Activated naive CD4-positive, alpha-beta T cell treated with anti-CD3 and anti-CD28 coated beads, Interleukin-2, amount 10 ng/mL, durations not matched to agents 7 days and 5 days (primary cell): ENCODE measurements at regions of chr10 and their contacts with region 1.

Region 1: DNA sequence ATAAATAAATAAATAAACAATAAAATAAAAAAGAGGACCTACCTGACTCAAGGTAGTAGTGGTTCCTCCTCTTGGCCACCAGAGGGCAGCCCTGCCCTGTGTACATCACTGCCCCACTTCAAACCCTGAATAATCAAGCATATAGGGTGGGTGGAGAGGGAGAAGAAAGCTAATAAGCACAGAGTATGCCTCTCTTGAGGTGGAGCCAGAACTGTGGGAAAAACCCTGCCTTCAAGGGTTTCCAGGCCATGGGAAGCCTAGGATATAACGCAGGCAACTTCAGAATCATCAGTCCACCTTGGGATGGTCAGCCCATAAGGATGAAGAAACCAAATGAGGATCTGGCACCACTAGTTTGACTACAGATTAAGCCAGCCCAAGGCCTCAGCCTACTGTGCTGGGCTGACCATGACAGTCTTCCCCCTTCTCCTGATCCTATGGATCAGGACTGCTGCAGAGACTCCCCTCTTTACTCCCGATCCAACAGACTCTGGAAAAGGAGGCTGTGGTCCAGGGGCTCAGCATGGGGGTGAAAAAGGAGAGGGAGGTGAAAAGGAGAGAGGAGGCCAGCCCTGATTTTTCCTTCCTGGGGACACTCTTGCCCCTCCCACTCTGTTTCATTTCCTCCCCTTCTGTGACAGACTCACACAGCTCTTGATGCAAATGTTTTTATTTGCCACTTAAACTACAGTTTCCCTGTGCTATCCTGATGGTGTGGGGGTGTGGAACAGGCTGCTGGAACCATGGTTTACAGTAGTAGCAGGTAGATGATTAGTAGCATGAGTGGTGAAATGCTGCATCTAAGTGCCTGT is 10.1 kb downstream of the AVPI1 start:
- DNase-seq: peak; percentile 58
- H3K4me3 Mint-ChIP-seq: no peak overlapping the region
- H3K27ac Mint-ChIP-seq: peak overlapping the region; percentile 34
- H3K4me1 Mint-ChIP-seq: peaks cover 13% of the 10 kb centered on the region
- H3K27me3 Mint-ChIP-seq: no peaks in the 10 kb centered on the region

Region 2: GRCh38 chr10:97686962-97687784 is 10.2 kb after region 1 on chr10 and contains the start of gene AVPI1:
- CTCF ChIA-PET with region 1: interaction called, 29 read pairs
- DNase-seq: peak; percentile 97
- H3K4me3 Mint-ChIP-seq: peak within 1 kb of the TSS; percentile 80
- H3K27ac Mint-ChIP-seq: peak within 1 kb of the TSS; percentile 22
- H3K4me1 Mint-ChIP-seq: peaks cover 18% of the 10 kb centered on the region
- H3K27me3 Mint-ChIP-seq: peaks cover 16% of the 10 kb centered on the region

Region 3: GRCh38 chr10:97729014-97729413 is 52.0 kb after region 1 on chr10:
- CTCF ChIA-PET with region 1: interaction called, 10 read pairs
- DNase-seq: no peak
- H3K4me3 Mint-ChIP-seq: no peak overlapping the region
- H3K27ac Mint-ChIP-seq: no peak overlapping the region
- H3K4me1 Mint-ChIP-seq: no peaks in the 10 kb centered on the region
- H3K27me3 Mint-ChIP-seq: peaks cover 8% of the 10 kb centered on the region

Region 4: DNA sequence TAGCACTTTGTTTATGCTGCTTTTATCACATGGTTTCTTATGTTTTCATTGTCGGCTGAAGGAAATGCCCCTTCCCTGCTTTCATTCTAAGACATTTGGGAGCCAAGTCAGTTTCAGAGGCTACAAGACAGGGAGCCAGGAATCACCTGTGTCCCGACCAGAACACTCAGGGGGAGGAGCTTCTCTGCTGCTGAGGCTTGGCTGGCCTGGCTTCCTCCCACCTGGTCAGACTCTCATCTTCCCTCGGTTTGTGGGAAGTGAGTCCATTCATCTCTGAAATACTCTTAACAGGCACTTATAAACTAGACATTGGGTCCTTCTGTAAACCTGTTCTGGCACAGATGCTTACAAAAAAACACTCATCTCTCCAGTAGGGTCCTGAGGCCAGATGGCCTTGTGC is 153.1 kb after region 1 on chr10:
- CTCF ChIA-PET with region 1: no interaction called
- DNase-seq: no peak
- H3K4me3 Mint-ChIP-seq: no peak overlapping the region
- H3K27ac Mint-ChIP-seq: no peak overlapping the region
- H3K4me1 Mint-ChIP-seq: peaks cover 21% of the 10 kb centered on the region
- H3K27me3 Mint-ChIP-seq: peaks cover 11% of the 10 kb centered on the region

Region 5: DNA sequence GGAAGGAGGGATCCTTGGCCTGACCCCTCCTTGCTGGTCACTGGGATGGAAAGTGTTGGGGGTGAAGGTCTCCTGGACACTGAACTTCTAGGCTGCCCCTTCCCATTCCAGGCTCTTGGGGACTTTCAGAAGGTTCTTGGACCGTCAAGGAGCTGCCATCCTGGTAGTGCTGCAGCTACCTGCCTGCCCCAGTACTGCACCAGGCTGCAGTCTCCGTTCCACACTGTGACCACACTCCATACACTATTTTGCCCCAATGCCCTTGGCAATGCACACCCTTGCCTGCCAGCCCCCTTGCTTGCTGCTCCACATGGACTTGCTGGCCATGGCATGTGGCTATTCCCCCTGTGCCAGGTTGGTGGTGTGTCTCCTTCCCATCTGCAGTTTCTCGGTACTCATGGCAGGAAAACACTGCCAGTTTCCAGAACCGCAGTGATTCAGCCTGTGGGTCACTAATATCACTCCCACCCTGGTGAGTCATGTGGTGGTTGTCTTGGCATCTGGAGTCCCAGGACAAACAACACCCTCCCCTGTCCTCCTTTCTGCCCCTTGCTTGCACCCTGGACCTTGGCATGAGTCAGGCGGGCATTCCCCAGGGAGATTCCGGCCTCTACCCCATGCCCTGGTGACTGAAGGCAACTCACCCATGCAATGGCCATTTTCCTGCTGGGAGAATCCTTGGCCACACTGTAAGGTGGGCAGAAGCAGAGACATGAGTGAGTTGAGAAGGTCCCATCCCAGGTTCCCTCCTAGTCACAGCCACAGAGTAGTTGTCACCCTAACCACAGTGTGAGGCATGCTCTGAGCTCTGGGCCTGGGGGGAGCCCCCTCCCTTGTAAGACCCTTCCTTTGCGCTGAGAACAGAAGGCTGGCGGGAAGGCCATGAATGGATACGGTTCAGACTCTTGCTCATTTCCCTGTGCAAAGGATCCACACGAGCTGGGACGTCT is 205.4 kb after region 1 on chr10:
- CTCF ChIA-PET with region 1: no interaction called
- DNase-seq: no peak
- H3K4me3 Mint-ChIP-seq: no peak overlapping the region
- H3K27ac Mint-ChIP-seq: no peak overlapping the region
- H3K4me1 Mint-ChIP-seq: no peaks in the 10 kb centered on the region
- H3K27me3 Mint-ChIP-seq: peaks cover 29% of the 10 kb centered on the region

Region 6: GRCh38 chr10:99248824-99249223 is 1571.8 kb after region 1 on chr10:
- CTCF ChIA-PET with region 1: no interaction called
- DNase-seq: no peak
- H3K4me3 Mint-ChIP-seq: no peak overlapping the region
- H3K27ac Mint-ChIP-seq: no peak overlapping the region
- H3K4me1 Mint-ChIP-seq: no peaks in the 10 kb centered on the region
- H3K27me3 Mint-ChIP-seq: no peaks in the 10 kb centered on the region